IMR-90 (cell line): ENCODE measurements at regions of chr6 and their contacts with region 1.

Region 1: DNA sequence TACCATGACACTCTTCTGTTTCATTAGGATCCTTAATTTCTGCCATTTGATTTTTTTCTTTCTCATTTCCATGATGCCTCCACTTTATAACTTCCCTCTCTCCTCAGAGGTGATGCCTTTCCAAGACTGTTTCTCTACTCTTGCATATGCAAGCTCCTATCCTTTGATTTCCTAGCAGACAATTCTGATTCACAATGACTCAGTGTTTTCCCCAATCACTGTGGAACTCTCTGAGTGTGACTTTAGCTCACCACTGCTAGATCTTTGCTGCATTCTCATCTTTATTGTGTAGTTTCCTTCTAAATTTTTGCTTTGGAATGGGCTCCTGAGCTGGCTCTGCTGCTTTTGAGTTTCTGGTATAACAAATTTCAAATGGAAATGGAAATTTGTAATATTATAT is 184.9 kb downstream of the TINAG start:
- DNase-seq: peak; percentile 86
- ATAC-seq: peak; percentile 94
- H3K4me3 ChIP-seq: no peak overlapping the region
- H3K27ac ChIP-seq: no peak overlapping the region
- H3K4me1 ChIP-seq: no peaks in the 10 kb centered on the region
- H3K27me3 ChIP-seq: no peaks in the 10 kb centered on the region
- CTCF ChIP-seq: no peak
- POLR2A ChIP-seq: no peak
- RAD21 ChIP-seq: no peak

Region 2: GRCh38 chr6:55868771-55869479 is 1375.8 kb after region 1 on chr6:
- CTCF ChIA-PET with region 1: no interaction called
- POLR2A ChIA-PET with region 1: no interaction called
- dilution Hi-C with region 1: no loop called
- in situ Hi-C with region 1: no loop called
- intact Hi-C with region 1: loop called (anchors 10 kb)
- DNase-seq: peak; percentile 75
- ATAC-seq: no peak; the same call in 1 of the 2 replicates
- H3K4me3 ChIP-seq: no peak overlapping the region
- H3K27ac ChIP-seq: no peak overlapping the region
- H3K4me1 ChIP-seq: 0 out of 2 replicates have a peak, but pooled peaks cover 2% of the 10 kb centered on the region
- H3K27me3 ChIP-seq: no peaks in the 10 kb centered on the region
- CTCF ChIP-seq: no peak
- POLR2A ChIP-seq: no peak
- RAD21 ChIP-seq: no peak